B cell (primary cell): ENCODE measurements at regions of chr13 and their contacts with region 1.

Region 1: DNA sequence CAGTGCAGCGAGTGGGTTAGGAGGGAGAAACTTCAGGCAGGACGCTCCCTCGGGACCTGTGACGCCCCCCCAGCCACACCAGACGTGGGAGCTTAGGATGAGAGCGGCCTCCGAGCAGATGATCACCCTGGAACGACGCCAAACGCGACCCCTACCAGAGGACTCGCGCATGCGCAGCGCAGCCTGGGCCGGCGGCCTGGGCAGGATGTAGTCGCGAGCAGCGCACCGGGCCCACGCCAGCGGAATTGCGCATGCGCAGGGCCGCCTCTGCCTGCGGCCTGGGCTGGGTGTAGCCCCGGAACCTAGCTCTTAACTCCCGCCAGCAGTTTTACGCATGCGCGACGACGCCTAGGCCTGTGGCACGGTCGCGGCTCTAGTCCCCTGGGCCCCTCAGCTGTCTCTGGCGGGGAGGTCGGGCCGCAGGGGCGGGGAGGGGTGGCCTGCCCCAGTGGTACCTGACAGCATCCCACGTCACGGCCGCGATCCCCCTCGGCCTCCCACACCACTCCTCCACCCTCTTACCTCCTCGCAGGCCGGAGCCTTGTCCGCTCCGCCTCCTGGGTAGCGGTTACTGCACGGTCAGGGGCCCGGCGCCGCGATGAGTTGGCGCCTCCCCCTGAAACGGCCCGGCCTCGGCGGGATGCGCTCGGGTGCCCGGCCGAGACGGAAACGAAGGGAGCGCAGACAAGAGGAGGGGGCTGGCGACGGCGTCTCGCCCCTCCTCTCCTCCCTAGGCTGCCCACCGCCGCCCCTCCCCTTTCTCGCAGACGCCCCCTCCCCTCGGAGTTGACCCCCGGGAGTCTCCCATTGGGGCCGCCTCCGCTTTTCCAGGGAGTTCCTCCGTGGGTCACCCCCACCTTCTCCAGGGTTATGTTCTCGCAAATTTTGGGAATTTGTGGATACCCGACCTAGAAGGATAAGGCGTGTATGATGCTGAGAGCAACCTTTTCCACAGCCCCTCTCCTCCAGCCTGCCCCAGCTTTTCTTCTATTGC is at the start of gene RCBTB2:
- DNase-seq: peak; percentile 98
- ATAC-seq: peak; percentile 89
- H3K4me3 ChIP-seq: peak within 1 kb of the TSS; percentile 54 to 92 (median 82)
- H3K4me3 Mint-ChIP-seq: peak within 1 kb of the TSS; percentile 97
- H3K27ac ChIP-seq: peak within 1 kb of the TSS; percentile 63 to 85
- H3K27ac Mint-ChIP-seq: peak within 1 kb of the TSS; percentile 98
- H3K4me1 ChIP-seq: peaks cover 20 to 24% of the 10 kb centered on the region in 2 donors
- H3K4me1 Mint-ChIP-seq: peaks cover 26% of the 10 kb centered on the region
- H3K27me3 ChIP-seq: peaks cover 0 to 15% (median 11%) of the 10 kb centered on the region in 4 experiments
- H3K27me3 Mint-ChIP-seq: peaks cover 22% of the 10 kb centered on the region
- CTCF ChIP-seq: no peak
- total RNA-seq, gene RCBTB2: 2.7 and 3.7 TPM in 2 replicates

Region 2: DNA sequence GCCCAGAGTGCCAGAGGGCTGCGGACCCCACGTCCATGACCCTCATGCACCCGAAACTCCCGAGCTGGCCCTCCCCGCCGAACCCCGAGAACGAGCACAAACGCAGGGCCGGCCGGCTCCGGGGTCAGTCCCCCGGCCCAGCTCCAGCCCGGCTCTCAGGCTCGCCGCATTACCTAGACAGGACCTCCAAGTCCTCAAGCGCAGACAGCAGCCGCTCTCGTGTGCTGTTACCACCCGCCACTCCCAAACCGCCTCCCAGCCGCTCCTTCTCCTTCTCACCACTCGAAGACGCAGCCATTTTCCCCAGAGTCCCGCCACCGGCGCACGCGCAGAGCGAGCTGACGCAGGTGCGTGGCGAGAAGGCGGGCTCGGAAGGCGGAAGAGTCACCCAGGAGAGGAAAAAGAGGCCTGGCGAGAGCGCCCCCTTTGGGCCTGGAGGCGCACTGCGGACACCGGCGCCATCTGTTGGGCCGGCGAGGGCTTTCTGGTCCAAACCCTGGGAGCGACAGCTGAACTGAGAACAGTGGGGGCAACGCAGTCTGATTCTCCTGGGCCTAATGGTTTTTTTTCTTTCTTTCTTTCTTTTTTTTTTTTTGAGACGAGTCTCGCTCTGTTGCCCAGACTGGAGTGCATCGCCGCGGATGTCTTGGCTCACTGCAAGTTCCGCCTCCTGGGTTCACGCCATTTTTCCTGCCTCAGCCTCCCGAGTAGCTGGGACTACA is 437.9 kb before region 1 on chr13 and contains the start of gene MED4:
- CTCF ChIA-PET with region 1: no interaction called
- POLR2A ChIA-PET with region 1: interaction called, 3 read pairs
- intact Hi-C with region 1: loop called (anchors 1 kb)
- DNase-seq: peak; percentile 97
- ATAC-seq: peak; percentile 99
- H3K4me3 ChIP-seq: peak within 1 kb of the TSS; percentile 86 to 99 (median 92)
- H3K4me3 Mint-ChIP-seq: peak within 1 kb of the TSS; percentile 94
- H3K27ac ChIP-seq: peak within 1 kb of the TSS; percentile 83 to 89
- H3K27ac Mint-ChIP-seq: peak within 1 kb of the TSS; percentile 95
- H3K4me1 ChIP-seq: peaks cover 16 to 17% of the 10 kb centered on the region in 2 donors
- H3K4me1 Mint-ChIP-seq: peaks cover 35% of the 10 kb centered on the region
- H3K27me3 ChIP-seq: no peaks in the 10 kb centered on the region
- H3K27me3 Mint-ChIP-seq: peaks cover 10% of the 10 kb centered on the region
- CTCF ChIP-seq: peak; percentile 99
- total RNA-seq, gene MED4: 49.7 and 50.1 TPM in 2 replicates

Region 3: DNA sequence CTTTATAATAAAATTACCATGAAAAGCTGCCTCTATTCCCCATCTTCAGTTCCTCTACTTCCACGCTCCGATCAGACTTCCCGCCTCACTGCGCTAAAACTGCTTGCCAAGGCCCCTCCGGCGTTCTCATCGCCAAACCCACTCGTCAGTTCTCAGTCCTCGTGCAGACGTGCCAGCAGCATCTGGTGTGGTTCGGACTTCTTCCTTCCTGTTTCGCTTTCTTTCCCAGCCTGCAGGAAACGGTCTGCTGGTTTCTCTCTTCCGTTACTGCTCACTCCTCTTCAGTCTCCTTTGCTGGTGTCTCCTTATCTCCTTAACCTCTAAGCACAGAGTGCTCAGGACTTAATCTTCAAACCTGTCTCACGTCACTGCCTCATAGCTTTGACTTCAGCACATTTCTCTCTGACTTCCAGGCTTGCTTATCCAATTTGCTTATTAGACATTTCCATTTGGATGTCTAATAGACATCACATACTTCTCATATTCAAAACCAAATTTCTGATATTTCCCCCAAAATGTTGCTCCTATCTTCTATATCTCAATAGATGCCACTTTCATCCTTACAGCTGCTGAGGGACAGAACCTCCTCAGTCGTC is 40.2 kb before region 1 on chr13:
- CTCF ChIA-PET with region 1: no interaction called
- POLR2A ChIA-PET with region 1: interaction called, 9 read pairs
- intact Hi-C with region 1: loop called (anchors 1 kb)
- DNase-seq: peak; percentile 91
- ATAC-seq: peak; percentile 86
- H3K4me3 ChIP-seq: peak overlapping the region; percentile 10 to 65 (median 32)
- H3K4me3 Mint-ChIP-seq: no peak overlapping the region
- H3K27ac ChIP-seq: peak overlapping the region; percentile 63 to 66
- H3K27ac Mint-ChIP-seq: no peak overlapping the region
- H3K4me1 ChIP-seq: peaks cover 57% of the 10 kb centered on the region in 2 donors
- H3K4me1 Mint-ChIP-seq: peaks cover 38% of the 10 kb centered on the region
- H3K27me3 ChIP-seq: no peaks in the 10 kb centered on the region
- H3K27me3 Mint-ChIP-seq: no peaks in the 10 kb centered on the region
- CTCF ChIP-seq: no peak

Region 4: GRCh38 chr13:48505597-48506091 is 27.2 kb before region 1 on chr13:
- CTCF ChIA-PET with region 1: interaction called, 3 read pairs
- POLR2A ChIA-PET with region 1: no interaction called
- intact Hi-C with region 1: loop called (anchors 1 kb)
- DNase-seq: peak; percentile 85
- ATAC-seq: peak; percentile 84
- H3K4me3 ChIP-seq: peak overlapping the region in 2 of 5 experiments; percentile 30 to 32
- H3K4me3 Mint-ChIP-seq: peak overlapping the region; percentile 82
- H3K27ac ChIP-seq: no peak overlapping the region
- H3K27ac Mint-ChIP-seq: peak overlapping the region; percentile 84
- H3K4me1 ChIP-seq: peaks cover 36 to 37% of the 10 kb centered on the region in 2 donors
- H3K4me1 Mint-ChIP-seq: peaks cover 49% of the 10 kb centered on the region
- H3K27me3 ChIP-seq: peaks cover 0 to 49% (median 7%) of the 10 kb centered on the region in 4 experiments
- H3K27me3 Mint-ChIP-seq: peaks cover 33% of the 10 kb centered on the region
- CTCF ChIP-seq: no peak

Region 5: DNA sequence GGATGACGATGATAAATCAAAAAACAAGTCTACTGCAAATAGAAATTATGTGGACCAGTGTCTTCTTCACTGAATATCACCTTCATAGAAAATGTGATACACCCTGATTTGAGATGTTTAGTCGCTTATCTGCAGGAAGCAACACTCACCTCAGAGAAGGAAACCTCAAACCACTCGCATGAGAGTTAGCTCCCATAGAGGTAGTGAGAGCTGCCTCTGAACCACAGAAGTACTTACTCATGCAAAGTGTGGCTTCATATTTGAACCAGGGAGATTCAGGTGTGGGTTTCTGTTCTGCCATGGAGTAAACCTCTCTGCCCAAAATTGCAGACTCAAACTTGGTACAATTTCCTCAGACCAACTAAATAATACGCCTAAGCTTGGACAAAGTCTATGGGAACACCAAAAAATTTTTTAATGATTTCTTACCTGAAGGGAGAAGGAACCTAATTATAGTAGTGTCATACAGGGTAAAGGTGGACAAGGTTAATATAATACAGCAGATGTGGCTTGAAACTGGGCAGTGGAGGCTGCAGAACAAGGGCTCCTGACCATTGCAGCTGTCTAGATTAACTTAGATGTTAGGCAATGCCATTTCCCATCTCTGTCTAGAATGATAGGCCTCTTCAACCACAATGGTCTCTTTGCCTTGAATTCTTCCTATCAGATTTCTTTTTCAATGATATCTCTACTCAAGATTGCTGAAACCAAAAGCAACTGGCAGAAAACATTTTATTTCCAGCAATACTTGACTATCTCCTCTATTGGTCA is 29.7 kb after region 1 on chr13:
- CTCF ChIA-PET with region 1: interaction called, 3 read pairs
- POLR2A ChIA-PET with region 1: no interaction called
- intact Hi-C with region 1: loop called (anchors 1 kb)
- DNase-seq: peak; percentile 86
- ATAC-seq: peak; percentile 99
- H3K4me3 ChIP-seq: no peak overlapping the region
- H3K4me3 Mint-ChIP-seq: no peak overlapping the region
- H3K27ac ChIP-seq: no peak overlapping the region
- H3K27ac Mint-ChIP-seq: no peak overlapping the region
- H3K4me1 ChIP-seq: peaks cover 18 to 45% of the 10 kb centered on the region in 2 donors
- H3K4me1 Mint-ChIP-seq: peaks cover 18% of the 10 kb centered on the region
- H3K27me3 ChIP-seq: peaks cover 2 to 78% (median 66%) of the 10 kb centered on the region in 4 experiments
- H3K27me3 Mint-ChIP-seq: peaks cover 67% of the 10 kb centered on the region
- CTCF ChIP-seq: no peak